ENCODE measurements at regions of chr3 and their contacts with region 1.

Region 1: GRCh38 chr3:102229062-102229655 is 205.7 kb upstream of the ZPLD1 start:
- DNase-seq: peak; percentile 61
- ATAC-seq: peak; percentile 78
- H3K4me3 ChIP-seq: no peak overlapping the region
- H3K27ac ChIP-seq: no peak overlapping the region
- H3K4me1 ChIP-seq: peaks cover 6% of the 10 kb centered on the region; the same call in 1 of the 2 replicates
- H3K27me3 ChIP-seq: no peaks in the 10 kb centered on the region
- CTCF ChIP-seq: peak; percentile 89 to 93 (median 91)
- EP300 ChIP-seq: no peak
- POLR2A ChIP-seq: no peak
- RAD21 ChIP-seq: peak; percentile 98

Region 2: DNA sequence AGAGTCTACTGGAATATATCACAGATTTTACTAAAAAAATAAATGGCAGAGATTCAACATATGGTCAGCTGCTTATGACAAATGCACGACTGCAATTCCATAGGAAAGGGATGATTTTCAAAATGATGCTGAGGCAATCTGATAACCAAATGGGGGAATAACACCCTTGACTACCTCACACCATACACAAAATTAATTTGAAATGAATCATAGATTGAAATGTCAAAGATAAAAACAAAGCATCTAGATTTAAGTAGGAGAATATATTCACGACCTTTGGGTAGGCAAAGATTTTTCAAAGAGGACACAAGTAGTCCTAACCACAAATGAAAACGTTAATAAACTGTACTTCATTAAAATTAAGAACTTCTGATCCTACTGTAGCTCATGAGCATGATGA is 727.4 kb before region 1 on chr3:
- CTCF ChIA-PET with region 1: no interaction called
- POLR2A ChIA-PET with region 1: no interaction called
- RAD21 ChIA-PET with region 1: no interaction called
- SMC1A ChIA-PET with region 1: no interaction called
- in situ Hi-C with region 1: no loop called
- intact Hi-C with region 1: no loop called
- DNase-seq: no peak
- ATAC-seq: no peak
- H3K4me3 ChIP-seq: no peak overlapping the region
- H3K27ac ChIP-seq: no peak overlapping the region
- H3K4me1 ChIP-seq: no peaks in the 10 kb centered on the region
- H3K27me3 ChIP-seq: no peaks in the 10 kb centered on the region
- CTCF ChIP-seq: no peak
- EP300 ChIP-seq: no peak
- POLR2A ChIP-seq: no peak
- RAD21 ChIP-seq: no peak

Region 3: GRCh38 chr3:101791778-101792177 is 437.4 kb before region 1 on chr3:
- CTCF ChIA-PET with region 1: interaction called, 14 read pairs
- POLR2A ChIA-PET with region 1: no interaction called
- RAD21 ChIA-PET with region 1: interaction called, 5 read pairs
- SMC1A ChIA-PET with region 1: interaction called, 12 read pairs
- in situ Hi-C with region 1: no loop called
- intact Hi-C with region 1: no loop called
- DNase-seq: peak; percentile 91
- ATAC-seq: peak; percentile 99
- H3K4me3 ChIP-seq: no peak overlapping the region
- H3K27ac ChIP-seq: peak overlapping the region; percentile 53
- H3K4me1 ChIP-seq: peaks cover 5% of the 10 kb centered on the region
- H3K27me3 ChIP-seq: no peaks in the 10 kb centered on the region
- CTCF ChIP-seq: no peak
- EP300 ChIP-seq: peak; percentile 74 to 85; a peak in 2 of 4 replicates
- POLR2A ChIP-seq: no peak
- RAD21 ChIP-seq: no peak

Region 4: DNA sequence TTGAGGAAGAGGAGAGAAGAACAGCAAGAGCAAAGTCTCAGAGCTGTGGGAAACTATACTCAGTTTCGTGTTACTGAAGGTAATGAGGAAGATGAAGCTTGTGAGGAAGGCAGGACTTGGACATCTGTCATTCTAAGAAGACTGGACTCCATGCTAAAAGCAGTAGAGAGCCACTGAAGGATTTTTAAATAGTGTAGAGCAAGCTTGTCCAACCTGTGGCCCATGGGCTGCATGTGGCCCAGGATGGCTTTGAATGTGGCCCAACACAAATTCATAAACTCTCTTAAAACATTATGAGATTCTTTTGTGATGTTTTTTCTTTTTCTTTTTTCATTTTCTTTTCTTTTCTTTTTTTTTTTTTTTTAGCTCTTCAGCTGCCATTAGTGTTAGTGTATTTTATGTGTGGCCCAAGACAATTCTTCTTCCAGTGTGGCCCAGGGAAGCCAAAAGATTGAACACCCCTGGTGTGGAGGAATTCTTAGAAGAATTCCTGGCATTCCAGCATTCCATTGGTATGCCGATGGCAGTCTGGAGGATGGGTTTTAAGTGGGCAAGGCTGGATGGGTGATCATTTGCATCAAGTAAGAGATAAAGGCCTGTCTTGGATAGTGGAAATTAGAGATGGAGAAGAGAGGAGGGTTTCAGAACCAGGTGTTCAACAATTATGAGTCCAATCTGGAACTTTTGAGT is 386.8 kb before region 1 on chr3:
- CTCF ChIA-PET with region 1: interaction called, 23 read pairs
- POLR2A ChIA-PET with region 1: interaction called, 3 read pairs
- RAD21 ChIA-PET with region 1: interaction called, 17 read pairs
- SMC1A ChIA-PET with region 1: interaction called, 8 read pairs
- in situ Hi-C with region 1: no loop called
- intact Hi-C with region 1: no loop called
- DNase-seq: no peak
- ATAC-seq: peak; percentile 15
- H3K4me3 ChIP-seq: no peak overlapping the region
- H3K27ac ChIP-seq: peak overlapping the region; percentile 22
- H3K4me1 ChIP-seq: peaks cover 27% of the 10 kb centered on the region
- H3K27me3 ChIP-seq: no peaks in the 10 kb centered on the region
- CTCF ChIP-seq: no peak
- EP300 ChIP-seq: no peak
- POLR2A ChIP-seq: no peak
- RAD21 ChIP-seq: no peak

Region 5: DNA sequence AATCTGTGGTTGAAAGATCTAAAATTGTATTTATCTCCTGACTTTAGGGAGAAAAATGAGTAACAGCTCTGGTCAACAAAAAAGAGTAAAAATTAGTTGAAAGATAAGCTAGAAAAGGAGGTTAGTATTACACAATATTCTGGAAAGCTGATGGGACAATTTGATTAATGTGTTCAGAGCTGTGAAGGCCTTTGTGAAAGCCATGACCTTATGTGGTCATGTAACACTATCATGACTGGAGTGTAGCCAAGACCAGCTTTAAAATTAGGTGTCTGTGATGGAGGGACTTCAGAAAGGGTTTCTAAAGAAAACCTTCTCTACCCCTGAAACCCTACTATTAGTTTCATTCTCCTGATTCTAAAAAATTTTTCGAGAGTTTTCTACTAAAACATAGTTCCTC is 252.7 kb before region 1 on chr3:
- CTCF ChIA-PET with region 1: interaction called, 3 read pairs
- POLR2A ChIA-PET with region 1: no interaction called
- RAD21 ChIA-PET with region 1: interaction called, 10 read pairs
- SMC1A ChIA-PET with region 1: interaction called, 20 read pairs
- in situ Hi-C with region 1: no loop called
- intact Hi-C with region 1: no loop called
- DNase-seq: peak; percentile 74
- ATAC-seq: peak; percentile 96
- H3K4me3 ChIP-seq: no peak overlapping the region
- H3K27ac ChIP-seq: peak overlapping the region; percentile 4; the same call in 1 of the 2 replicates
- H3K4me1 ChIP-seq: peaks cover 14% of the 10 kb centered on the region; the same call in 1 of the 2 replicates
- H3K27me3 ChIP-seq: no peaks in the 10 kb centered on the region
- CTCF ChIP-seq: no peak
- EP300 ChIP-seq: peak; percentile 14 to 66; a peak in 3 of 4 replicates
- POLR2A ChIP-seq: no peak
- RAD21 ChIP-seq: no peak

Region 6: DNA sequence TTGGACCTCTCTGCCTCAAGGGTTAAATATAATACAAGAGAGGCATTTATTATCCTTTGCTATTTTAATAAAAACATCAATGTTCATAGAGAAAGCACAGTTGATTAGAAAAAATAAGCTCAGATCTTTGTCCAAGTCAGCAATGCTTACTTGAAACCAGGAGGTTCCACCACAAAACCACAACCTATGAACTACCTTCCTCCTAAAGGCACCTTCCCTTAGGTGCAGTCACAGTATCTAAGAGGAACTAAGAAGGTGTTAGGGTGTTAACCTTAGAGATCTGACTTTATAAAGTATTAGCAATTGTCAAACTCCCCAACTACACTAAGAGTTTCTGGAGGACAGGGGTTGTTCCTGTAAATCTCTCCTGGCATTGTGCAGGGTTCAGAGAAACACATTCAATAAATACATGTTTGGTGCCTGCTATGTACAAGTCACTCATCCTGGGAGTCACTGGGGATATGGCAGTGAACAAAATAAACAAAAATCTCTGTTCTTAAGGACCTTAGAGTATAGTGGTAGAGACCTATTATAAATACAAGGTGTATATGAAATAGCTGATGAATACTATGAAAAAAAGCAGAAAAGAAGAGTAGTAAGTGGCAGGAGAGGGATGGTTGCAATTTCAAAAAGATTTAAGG is 171.3 kb before region 1 on chr3:
- CTCF ChIA-PET with region 1: interaction called, 12 read pairs
- POLR2A ChIA-PET with region 1: no interaction called
- RAD21 ChIA-PET with region 1: interaction called, 22 read pairs
- SMC1A ChIA-PET with region 1: interaction called, 6 read pairs
- in situ Hi-C with region 1: no loop called
- intact Hi-C with region 1: loop called (anchors 2 kb)
- DNase-seq: peak; percentile 85
- ATAC-seq: peak; percentile 79
- H3K4me3 ChIP-seq: no peak overlapping the region
- H3K27ac ChIP-seq: peak overlapping the region; percentile 65
- H3K4me1 ChIP-seq: peaks cover 37% of the 10 kb centered on the region
- H3K27me3 ChIP-seq: no peaks in the 10 kb centered on the region
- CTCF ChIP-seq: no peak
- EP300 ChIP-seq: peak; percentile 76 to 79; a peak in 3 of 4 replicates
- POLR2A ChIP-seq: no peak
- RAD21 ChIP-seq: no peak

Region 7: GRCh38 chr3:102536456-102536855 is 307.3 kb after region 1 on chr3:
- CTCF ChIA-PET with region 1: interaction called, 314 read pairs
- POLR2A ChIA-PET with region 1: no interaction called
- RAD21 ChIA-PET with region 1: interaction called, 177 read pairs
- SMC1A ChIA-PET with region 1: interaction called, 158 read pairs
- in situ Hi-C with region 1: loop called (anchors 5 kb)
- intact Hi-C with region 1: loop called (anchors 1 kb)
- DNase-seq: no peak
- ATAC-seq: peak; percentile 64
- H3K4me3 ChIP-seq: no peak overlapping the region
- H3K27ac ChIP-seq: no peak overlapping the region
- H3K4me1 ChIP-seq: no peaks in the 10 kb centered on the region
- H3K27me3 ChIP-seq: peaks cover 0 to 4% of the 10 kb centered on the region in 2 experiments; a peak in 1 of 4 replicates
- CTCF ChIP-seq: peak; percentile 34 to 56 (median 56); a peak in 5 of 6 replicates
- EP300 ChIP-seq: no peak
- POLR2A ChIP-seq: no peak
- RAD21 ChIP-seq: peak; percentile 70

Region 8: GRCh38 chr3:102796804-102797203 is 567.6 kb after region 1 on chr3:
- CTCF ChIA-PET with region 1: no interaction called
- POLR2A ChIA-PET with region 1: no interaction called
- RAD21 ChIA-PET with region 1: no interaction called
- SMC1A ChIA-PET with region 1: no interaction called
- in situ Hi-C with region 1: no loop called
- intact Hi-C with region 1: no loop called
- DNase-seq: no peak
- ATAC-seq: no peak
- H3K4me3 ChIP-seq: no peak overlapping the region
- H3K27ac ChIP-seq: no peak overlapping the region
- H3K4me1 ChIP-seq: no peaks in the 10 kb centered on the region
- H3K27me3 ChIP-seq: no peaks in the 10 kb centered on the region
- CTCF ChIP-seq: no peak
- EP300 ChIP-seq: no peak
- POLR2A ChIP-seq: no peak
- RAD21 ChIP-seq: no peak

Measured in GM12878 (cell line).